ENCODE measurements at regions of chr7 and their contacts with region 1.

Region 1: DNA sequence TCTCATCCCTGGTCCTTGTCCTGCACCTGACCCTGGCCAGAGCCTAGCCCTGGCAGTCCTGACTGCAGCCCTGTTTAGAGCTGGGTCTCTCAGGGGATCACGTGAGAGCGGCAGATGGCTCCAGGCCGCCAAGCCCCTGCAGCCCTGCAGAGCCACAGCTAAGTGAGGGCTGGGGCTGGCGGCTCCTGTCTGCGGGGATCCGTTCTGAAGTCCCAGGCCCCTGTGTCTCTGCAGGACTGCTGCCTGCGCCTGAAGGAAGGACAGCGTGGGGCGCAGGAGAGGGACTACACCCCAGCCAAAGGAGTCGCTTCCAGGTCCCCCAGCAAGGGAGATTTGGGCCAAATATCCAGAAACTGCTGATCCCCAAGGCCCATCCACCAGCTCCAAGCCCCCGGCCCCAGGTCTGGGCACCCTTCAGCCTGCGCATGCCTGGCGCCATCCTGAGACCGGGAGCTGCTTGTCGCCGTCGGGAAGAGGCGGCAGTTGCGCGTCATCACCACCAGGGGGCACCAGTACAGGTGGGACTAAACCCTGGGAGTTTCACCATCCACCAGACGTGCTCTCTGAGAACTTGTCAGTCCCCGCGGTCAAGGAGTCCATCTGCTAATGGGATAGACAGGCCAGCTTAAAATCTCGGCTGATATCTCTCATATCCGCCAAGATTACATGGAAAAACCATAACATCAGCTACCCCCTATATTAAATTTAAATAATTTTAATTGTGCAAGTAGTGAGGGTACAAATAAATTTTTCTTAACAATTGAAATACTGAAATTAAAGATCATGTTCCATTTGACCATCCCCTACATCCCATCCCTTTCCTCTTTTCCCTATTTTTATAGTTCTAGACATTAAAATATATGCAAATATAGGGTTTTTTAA is 25.1 kb upstream of the GHRHR start:
- DNase-seq: peak; percentile 92
- H3K4me3 ChIP-seq: peak overlapping the region; percentile 33 to 54; a peak in 3 of 4 replicates
- H3K27ac ChIP-seq: peak overlapping the region in 1 of 2 experiments; percentile 67; a peak in 1 of 4 replicates
- H3K4me1 ChIP-seq: peaks cover 0 to 7% of the 10 kb centered on the region in 2 experiments; a peak in 1 of 4 replicates
- H3K27me3 ChIP-seq: no peaks in the 10 kb centered on the region; the same call in 1 of the 2 replicates
- CTCF ChIP-seq: peak; percentile 99
- EP300 ChIP-seq: no peak
- RAD21 ChIP-seq: peak; percentile 76

Region 2: GRCh38 chr7:30780941-30781340 is 157.7 kb before region 1 on chr7:
- CTCF ChIA-PET with region 1: interaction called, 10 read pairs
- POLR2A ChIA-PET with region 1: no interaction called
- DNase-seq: peak; percentile 48
- H3K4me3 ChIP-seq: no peak overlapping the region
- H3K27ac ChIP-seq: peak overlapping the region in 1 of 2 experiments; percentile 12; a peak in 1 of 4 replicates
- H3K4me1 ChIP-seq: peaks cover 0 to 17% of the 10 kb centered on the region in 2 experiments; a peak in 1 of 4 replicates
- H3K27me3 ChIP-seq: no peaks in the 10 kb centered on the region
- CTCF ChIP-seq: no peak
- EP300 ChIP-seq: no peak; a peak in 1 of 4 replicates
- RAD21 ChIP-seq: no peak

Region 3: DNA sequence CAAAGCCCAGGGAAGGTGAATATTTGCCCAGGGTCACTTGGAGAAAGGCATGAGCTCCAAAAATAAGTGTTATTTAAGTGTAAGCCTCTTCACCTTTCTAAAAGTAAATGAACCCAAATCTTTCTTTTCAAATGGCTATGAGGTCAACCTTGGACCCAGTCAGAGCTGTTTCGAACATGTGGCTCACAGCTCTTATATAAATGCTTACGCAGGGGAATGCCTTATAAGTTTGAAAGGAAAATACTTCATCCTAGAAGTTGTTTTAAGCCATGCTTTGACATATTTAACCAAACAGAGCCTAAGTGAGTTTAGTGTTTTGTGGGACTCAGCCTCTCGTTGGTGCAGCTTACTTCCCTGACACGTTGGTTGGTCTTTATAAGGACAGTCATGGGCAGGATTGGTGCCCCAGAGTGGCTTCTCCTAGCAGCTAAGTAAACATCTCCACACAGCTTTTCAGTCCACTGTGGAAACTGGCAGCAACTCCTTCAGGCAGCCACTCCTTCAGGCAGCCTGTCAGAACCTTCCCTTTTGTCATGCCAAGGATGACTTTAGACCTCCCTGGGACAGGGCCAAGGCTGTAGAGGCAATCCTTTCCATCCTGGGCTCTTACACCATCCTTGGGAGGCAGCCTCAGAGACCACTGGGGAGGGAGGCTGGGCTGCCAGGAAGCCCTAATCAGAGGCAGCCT is 123.8 kb before region 1 on chr7:
- CTCF ChIA-PET with region 1: interaction called, 11 read pairs
- POLR2A ChIA-PET with region 1: no interaction called
- DNase-seq: no peak
- H3K4me3 ChIP-seq: no peak overlapping the region
- H3K27ac ChIP-seq: no peak overlapping the region
- H3K4me1 ChIP-seq: no peaks in the 10 kb centered on the region; a peak in 1 of 4 replicates
- H3K27me3 ChIP-seq: no peaks in the 10 kb centered on the region
- CTCF ChIP-seq: no peak
- EP300 ChIP-seq: no peak
- RAD21 ChIP-seq: no peak

Region 4: GRCh38 chr7:30877015-30877769 is 61.5 kb before region 1 on chr7:
- CTCF ChIA-PET with region 1: interaction called, 17 read pairs
- POLR2A ChIA-PET with region 1: no interaction called
- DNase-seq: no peak
- H3K4me3 ChIP-seq: no peak overlapping the region
- H3K27ac ChIP-seq: no peak overlapping the region
- H3K4me1 ChIP-seq: peaks cover 0 to 8% of the 10 kb centered on the region in 2 experiments; a peak in 1 of 4 replicates
- H3K27me3 ChIP-seq: no peaks in the 10 kb centered on the region
- CTCF ChIP-seq: no peak
- EP300 ChIP-seq: no peak
- RAD21 ChIP-seq: no peak

Region 5: GRCh38 chr7:30920584-30921539 is 17.8 kb before region 1 on chr7:
- CTCF ChIA-PET with region 1: interaction called, 84 read pairs
- POLR2A ChIA-PET with region 1: no interaction called
- DNase-seq: peak; percentile 14
- H3K4me3 ChIP-seq: no peak overlapping the region
- H3K27ac ChIP-seq: peak overlapping the region in 1 of 2 experiments; percentile 48; a peak in 2 of 4 replicates
- H3K4me1 ChIP-seq: peaks cover 20 to 34% of the 10 kb centered on the region in 2 experiments; a peak in 3 of 4 replicates
- H3K27me3 ChIP-seq: no peaks in the 10 kb centered on the region
- CTCF ChIP-seq: no peak
- EP300 ChIP-seq: no peak
- RAD21 ChIP-seq: no peak

Region 6: DNA sequence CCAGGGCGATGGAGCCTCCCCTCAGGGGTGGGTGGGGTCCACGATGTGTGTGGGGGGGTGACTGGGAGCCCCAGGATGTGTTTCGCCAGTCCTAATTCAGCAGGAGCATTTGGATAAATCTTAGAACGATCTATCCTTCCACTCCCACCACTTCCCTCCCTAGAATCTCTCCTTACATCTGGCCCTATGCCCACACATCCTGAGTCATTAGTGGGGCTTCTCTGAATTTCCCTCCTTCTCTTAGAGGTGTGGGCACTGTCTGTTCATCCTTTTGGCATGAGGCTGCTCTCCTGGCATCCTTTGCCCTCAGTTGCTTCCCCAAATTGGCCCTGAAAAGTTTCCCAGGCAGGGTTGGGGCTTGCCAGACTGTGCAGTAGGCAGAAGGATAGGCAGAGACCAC is 26.7 kb after region 1 on chr7:
- CTCF ChIA-PET with region 1: interaction called, 78 read pairs
- POLR2A ChIA-PET with region 1: no interaction called
- DNase-seq: no peak
- H3K4me3 ChIP-seq: no peak overlapping the region
- H3K27ac ChIP-seq: no peak overlapping the region
- H3K4me1 ChIP-seq: no peaks in the 10 kb centered on the region
- H3K27me3 ChIP-seq: peaks cover 52% of the 10 kb centered on the region
- CTCF ChIP-seq: no peak
- EP300 ChIP-seq: no peak
- RAD21 ChIP-seq: no peak

Region 7: DNA sequence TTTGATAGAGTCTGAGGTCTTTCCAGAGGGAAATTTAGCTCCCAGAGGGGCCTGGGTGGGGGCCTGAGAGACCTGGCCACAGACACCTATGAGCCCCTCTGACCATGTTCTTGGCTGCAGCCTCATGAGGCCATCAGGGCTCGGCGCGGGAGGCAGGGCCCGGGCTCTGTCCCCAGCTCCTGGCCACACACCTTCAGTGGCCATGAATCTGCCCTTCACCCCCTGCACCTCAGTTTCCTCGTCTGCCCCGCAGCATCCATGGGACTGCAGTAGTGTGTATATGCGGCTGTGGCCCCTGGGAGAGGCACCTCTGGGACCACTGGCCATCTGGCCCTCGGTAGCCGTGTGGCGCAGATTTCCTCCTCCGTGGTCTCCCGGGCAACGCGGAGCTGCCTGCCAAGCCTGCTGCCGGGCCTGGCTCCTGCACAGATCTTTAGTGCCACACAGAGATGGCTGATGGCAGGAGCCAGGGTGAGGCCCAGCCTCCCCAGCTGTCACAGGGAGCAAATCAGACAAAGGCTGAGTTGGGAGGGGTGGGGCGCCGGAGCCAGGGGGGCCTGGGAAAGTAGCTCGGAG is 89.8 kb after region 1 on chr7:
- CTCF ChIA-PET with region 1: no interaction called
- POLR2A ChIA-PET with region 1: no interaction called
- DNase-seq: peak; percentile 65
- H3K4me3 ChIP-seq: no peak overlapping the region
- H3K27ac ChIP-seq: no peak overlapping the region
- H3K4me1 ChIP-seq: peaks cover 0 to 23% of the 10 kb centered on the region in 2 experiments; a peak in 2 of 4 replicates
- H3K27me3 ChIP-seq: peaks cover 23% of the 10 kb centered on the region
- CTCF ChIP-seq: no peak
- EP300 ChIP-seq: no peak
- RAD21 ChIP-seq: no peak

Region 8: DNA sequence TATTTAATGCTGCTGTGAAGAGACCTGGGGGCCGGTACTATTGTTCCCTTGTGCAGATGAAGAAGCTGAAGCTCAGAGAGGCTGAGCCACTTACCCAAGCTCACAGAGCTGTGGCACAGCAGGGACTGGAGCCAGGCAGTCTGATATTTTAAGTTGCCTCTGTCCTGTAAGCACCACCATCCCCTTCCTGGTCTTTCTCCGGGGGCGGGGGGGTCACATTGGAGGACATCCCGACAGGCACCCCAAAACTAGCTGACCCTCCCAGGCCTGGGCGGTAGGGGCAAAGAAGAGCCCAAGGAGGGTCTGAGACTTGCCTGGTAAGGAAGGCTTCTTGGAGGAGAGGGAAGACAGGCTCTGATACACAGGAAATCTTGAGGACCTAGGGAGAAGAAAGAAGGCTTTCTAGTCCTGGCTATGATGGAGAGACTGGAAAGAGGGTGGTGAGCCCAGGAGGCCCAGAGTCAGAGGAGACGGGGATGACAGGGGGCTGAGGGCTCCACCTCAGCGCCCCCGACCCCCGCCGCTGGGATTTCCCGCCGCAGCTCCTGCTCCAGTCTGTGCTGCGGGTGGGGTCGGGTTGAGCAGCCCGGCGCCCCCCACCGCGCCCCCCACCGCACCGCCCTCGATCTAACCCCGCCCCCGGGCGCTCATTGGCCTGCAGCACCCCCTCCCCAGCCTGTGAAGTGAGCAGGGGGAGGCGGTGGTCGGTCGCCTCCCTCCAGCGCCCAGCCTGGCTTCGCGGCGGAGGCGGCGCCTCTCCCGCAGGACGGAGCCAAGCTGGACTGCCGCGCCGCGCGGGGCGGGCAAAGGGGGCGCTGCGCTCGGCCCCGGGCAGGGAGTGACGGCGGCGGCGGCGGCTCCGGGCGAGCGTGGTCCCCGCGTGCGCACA is 113.2 kb after region 1 on chr7 and contains the start of gene ADCYAP1R1:
- CTCF ChIA-PET with region 1: interaction called, 15 read pairs
- POLR2A ChIA-PET with region 1: no interaction called
- DNase-seq: peak; percentile 99
- H3K4me3 ChIP-seq: peak within 1 kb of the TSS; percentile 29 to 55; a peak in 3 of 4 replicates
- H3K27ac ChIP-seq: peak within 1 kb of the TSS in 1 of 2 experiments; percentile 59; a peak in 2 of 4 replicates
- H3K4me1 ChIP-seq: peaks cover 0 to 68% of the 10 kb centered on the region in 2 experiments; a peak in 2 of 4 replicates
- H3K27me3 ChIP-seq: peaks cover 48% of the 10 kb centered on the region
- CTCF ChIP-seq: no peak
- EP300 ChIP-seq: no peak
- RAD21 ChIP-seq: no peak
- polyA plus RNA-seq, gene ADCYAP1R1: 0.08 and 0.71 TPM in 2 replicates

Measured in SK-N-SH (cell line).